A549 (cell line): ENCODE measurements at regions of chr5 and their contacts with region 1.

Region 1: GRCh38 chr5:57779383-57780223 is 297.0 kb upstream of the ACTBL2 start:
- DNase-seq: peak; percentile 35 to 73
- ATAC-seq: peak; percentile 72 to 90; a peak in 4 of 6 replicates
- H3K4me3 ChIP-seq: no peak overlapping the region
- H3K27ac ChIP-seq: peak overlapping the region; percentile 29 to 74; a peak in 5 of 6 replicates
- H3K4me1 ChIP-seq: peaks cover 53% of the 10 kb centered on the region
- CTCF ChIP-seq: peak; percentile 89
- EP300 ChIP-seq: no peak
- POLR2A ChIP-seq: no peak
- RAD21 ChIP-seq: peak; percentile 96

Region 2: DNA sequence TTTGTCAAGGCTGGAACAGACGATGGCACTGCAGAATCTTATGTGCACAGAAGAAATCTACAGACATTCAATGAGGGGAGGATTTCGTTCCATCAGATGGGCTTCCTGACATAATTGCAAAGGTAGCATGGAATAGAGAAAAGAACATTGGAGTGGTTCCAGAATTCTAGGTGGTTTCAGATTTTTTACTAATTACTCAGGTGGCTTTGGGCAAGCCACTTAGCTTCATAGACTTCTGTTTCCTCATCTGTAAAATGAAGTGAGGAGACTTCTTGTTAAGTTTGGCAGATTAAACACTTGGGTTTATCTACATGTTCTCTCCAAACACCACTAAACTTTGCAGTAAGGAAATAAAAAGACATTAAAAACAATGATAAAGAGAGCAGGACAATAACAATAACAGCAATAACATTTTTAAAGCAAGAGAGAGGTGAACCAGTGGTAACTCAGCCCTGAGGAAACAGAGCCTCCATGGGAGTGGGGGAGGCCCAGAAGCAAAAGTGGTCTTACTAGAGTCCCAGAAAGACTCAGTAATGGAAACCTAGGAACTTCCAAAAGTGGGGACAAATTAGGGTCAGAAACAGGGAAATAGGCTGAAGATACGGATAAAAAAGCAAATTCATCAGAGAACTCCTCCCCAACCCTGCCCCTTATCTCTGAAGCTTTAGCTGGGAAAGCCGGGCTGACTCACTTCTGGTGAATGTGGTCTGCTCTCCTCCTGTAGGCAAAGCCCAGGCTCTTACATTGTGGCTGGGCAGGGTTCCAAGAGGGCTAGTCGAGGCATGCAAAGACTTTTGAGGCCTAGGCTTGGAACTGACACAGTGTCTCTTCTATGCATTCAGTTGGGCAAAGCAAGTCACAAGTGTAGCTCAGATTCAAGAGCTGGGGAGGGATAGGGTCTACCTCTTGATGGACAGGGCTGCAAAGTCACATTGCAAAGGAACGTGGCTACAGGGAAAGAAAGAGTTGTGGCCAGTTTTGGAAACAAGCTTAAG is 285.2 kb before region 1 on chr5:
- CTCF ChIA-PET with region 1: interaction called, 119 read pairs
- POLR2A ChIA-PET with region 1: interaction called, 3 read pairs
- DNase-seq: peak; percentile 54 to 71
- ATAC-seq: peak; percentile 81 to 95; a peak in 5 of 6 replicates
- H3K4me3 ChIP-seq: no peak overlapping the region
- H3K27ac ChIP-seq: peak overlapping the region; percentile 74 to 88
- H3K4me1 ChIP-seq: peaks cover 21% of the 10 kb centered on the region
- CTCF ChIP-seq: no peak
- EP300 ChIP-seq: no peak; a peak in 1 of 5 replicates
- POLR2A ChIP-seq: no peak
- RAD21 ChIP-seq: peak; percentile 20 to 31; a peak in 1 of 5 replicates

Region 3: DNA sequence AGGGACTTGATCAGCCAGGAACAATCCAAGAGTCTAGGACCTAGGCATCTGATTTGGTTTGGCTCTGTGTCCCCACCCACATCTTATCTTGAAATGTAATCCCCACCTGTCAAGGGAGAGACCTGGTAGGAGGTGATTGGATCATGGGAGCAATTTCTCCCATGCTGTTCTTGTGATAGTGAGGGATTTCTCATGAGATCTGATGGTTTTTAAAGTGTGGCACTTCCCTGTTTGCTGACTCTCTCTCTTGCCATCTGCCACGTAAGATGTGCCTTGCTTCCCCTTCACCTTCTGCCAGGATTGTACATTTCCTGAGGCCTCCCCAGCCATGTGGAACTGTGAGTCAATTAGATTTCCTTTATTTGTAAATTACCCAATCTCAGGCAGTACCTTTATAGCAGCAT is 95.3 kb before region 1 on chr5:
- CTCF ChIA-PET with region 1: no interaction called
- POLR2A ChIA-PET with region 1: no interaction called
- DNase-seq: no peak
- ATAC-seq: no peak
- H3K4me3 ChIP-seq: no peak overlapping the region
- H3K27ac ChIP-seq: 0 out of 6 replicates have a peak overlapping the region, but pooled peaks of 1 of the 2 experiments have one; percentile 20
- H3K4me1 ChIP-seq: peaks cover 8% of the 10 kb centered on the region
- CTCF ChIP-seq: no peak
- EP300 ChIP-seq: no peak
- POLR2A ChIP-seq: no peak
- RAD21 ChIP-seq: no peak

Region 4: DNA sequence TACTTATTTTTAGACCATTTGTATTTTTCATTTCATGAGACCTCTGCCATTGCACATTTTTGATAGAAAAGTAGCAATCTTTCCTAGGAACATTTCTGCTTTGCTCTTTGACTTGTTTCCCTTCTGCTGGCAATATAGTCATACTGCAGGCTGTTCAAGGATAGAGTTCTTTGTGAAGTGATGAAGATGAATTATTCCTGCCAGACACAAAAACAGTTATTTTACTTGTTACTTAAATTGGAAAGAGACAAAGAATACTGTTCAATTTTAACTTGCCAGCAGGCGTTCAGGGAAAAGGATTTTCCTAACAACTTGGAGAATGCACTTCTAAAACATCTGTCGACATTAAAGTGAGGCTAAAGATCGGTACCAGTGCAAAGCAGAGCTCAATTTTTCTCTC is 45.3 kb before region 1 on chr5:
- CTCF ChIA-PET with region 1: interaction called, 10 read pairs
- POLR2A ChIA-PET with region 1: no interaction called
- DNase-seq: no peak
- ATAC-seq: no peak
- H3K4me3 ChIP-seq: no peak overlapping the region
- H3K27ac ChIP-seq: peak overlapping the region; percentile 82 to 90; a peak in 5 of 6 replicates
- H3K4me1 ChIP-seq: peaks cover 42% of the 10 kb centered on the region
- CTCF ChIP-seq: no peak
- EP300 ChIP-seq: no peak
- POLR2A ChIP-seq: no peak
- RAD21 ChIP-seq: no peak

Region 5: GRCh38 chr5:57816108-57816507 is 36.5 kb after region 1 on chr5:
- CTCF ChIA-PET with region 1: interaction called, 18 read pairs
- POLR2A ChIA-PET with region 1: no interaction called
- DNase-seq: peak; percentile 49 to 85
- ATAC-seq: peak; percentile 87 to 95
- H3K4me3 ChIP-seq: no peak overlapping the region
- H3K27ac ChIP-seq: peak overlapping the region; percentile 3 to 69; a peak in 5 of 6 replicates
- H3K4me1 ChIP-seq: peaks cover 20% of the 10 kb centered on the region
- CTCF ChIP-seq: no peak
- EP300 ChIP-seq: no peak; a peak in 1 of 5 replicates
- POLR2A ChIP-seq: no peak
- RAD21 ChIP-seq: 0 out of 5 replicates have a peak, but pooled peaks have one; percentile 16 to 22

Region 6: DNA sequence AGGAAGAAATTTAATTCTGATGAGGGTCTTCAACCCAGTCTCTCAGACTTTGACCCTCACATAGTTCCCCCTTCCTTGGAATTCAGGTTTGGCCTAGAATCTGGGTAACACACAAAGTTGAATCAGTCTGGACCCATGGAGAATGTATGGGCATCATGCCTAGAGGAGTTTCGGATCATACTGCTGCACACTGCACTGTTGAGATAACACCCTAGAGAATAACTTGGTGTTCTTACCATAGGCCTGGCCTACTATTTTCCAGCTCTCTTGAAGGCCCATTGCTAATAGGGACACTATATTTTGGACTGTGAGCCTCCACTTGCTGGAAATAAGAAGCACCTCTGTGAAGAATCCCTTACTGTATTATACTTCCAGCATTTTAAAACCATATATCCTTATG is 266.8 kb after region 1 on chr5:
- CTCF ChIA-PET with region 1: no interaction called
- POLR2A ChIA-PET with region 1: no interaction called
- DNase-seq: no peak
- ATAC-seq: no peak
- H3K4me3 ChIP-seq: no peak overlapping the region
- H3K27ac ChIP-seq: no peak overlapping the region
- H3K4me1 ChIP-seq: peaks cover 7% of the 10 kb centered on the region; the same call in 1 of the 3 replicates
- CTCF ChIP-seq: no peak
- EP300 ChIP-seq: no peak
- POLR2A ChIP-seq: no peak
- RAD21 ChIP-seq: no peak

Region 7: GRCh38 chr5:58094031-58094430 is 314.4 kb after region 1 on chr5:
- CTCF ChIA-PET with region 1: no interaction called
- POLR2A ChIA-PET with region 1: no interaction called
- DNase-seq: peak; percentile 62 to 89
- ATAC-seq: peak; percentile 73 to 92
- H3K4me3 ChIP-seq: no peak overlapping the region
- H3K27ac ChIP-seq: peak overlapping the region; percentile 61 to 71
- H3K4me1 ChIP-seq: peaks cover 23% of the 10 kb centered on the region
- CTCF ChIP-seq: no peak
- EP300 ChIP-seq: peak; percentile 44 to 59; a peak in 3 of 5 replicates
- POLR2A ChIP-seq: no peak
- RAD21 ChIP-seq: peak in 1 of 2 experiments; percentile 44; a peak in 2 of 5 replicates

Region 8: DNA sequence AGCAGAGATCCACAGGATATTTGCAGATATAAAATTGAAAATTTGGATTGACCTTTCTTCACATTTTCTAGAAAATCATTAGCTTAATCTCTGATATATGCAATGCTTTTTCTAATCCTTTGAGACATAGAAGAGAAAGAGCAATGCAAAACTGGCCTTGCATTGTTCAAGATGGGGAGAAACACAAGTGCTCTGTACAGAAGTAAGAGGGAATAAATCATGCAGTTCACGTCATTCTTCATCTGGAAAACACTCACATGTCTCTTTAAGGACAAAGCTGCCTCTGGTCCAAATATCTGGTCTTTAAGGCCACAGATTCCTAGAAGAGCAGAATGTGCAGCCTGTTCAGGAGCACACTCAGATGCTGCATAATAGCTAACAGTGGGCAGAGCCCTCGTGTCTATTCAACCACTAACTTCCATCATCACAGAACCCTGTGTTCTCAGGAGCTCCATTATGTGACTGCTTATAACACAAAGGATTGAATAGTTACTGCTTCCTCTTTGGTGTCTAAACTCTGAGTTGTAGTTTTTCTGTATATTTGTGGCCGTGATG is 402.8 kb after region 1 on chr5:
- CTCF ChIA-PET with region 1: interaction called, 17 read pairs
- POLR2A ChIA-PET with region 1: no interaction called
- DNase-seq: no peak
- ATAC-seq: peak in 1 of 2 experiments; percentile 54; a peak in 3 of 6 replicates
- H3K4me3 ChIP-seq: no peak overlapping the region
- H3K27ac ChIP-seq: peak overlapping the region; percentile 85 to 91
- H3K4me1 ChIP-seq: peaks cover 62% of the 10 kb centered on the region
- CTCF ChIP-seq: no peak
- EP300 ChIP-seq: no peak
- POLR2A ChIP-seq: no peak
- RAD21 ChIP-seq: no peak

Region 9: GRCh38 chr5:58460732-58461286 is 681.2 kb after region 1 on chr5:
- CTCF ChIA-PET with region 1: interaction called, 149 read pairs
- POLR2A ChIA-PET with region 1: interaction called, 35 read pairs
- DNase-seq: peak; percentile 72 to 92
- ATAC-seq: peak; percentile 67 to 79
- H3K4me3 ChIP-seq: peak overlapping the region; percentile 91
- H3K27ac ChIP-seq: peak overlapping the region; percentile 96 to 100
- H3K4me1 ChIP-seq: peaks cover 17% of the 10 kb centered on the region
- CTCF ChIP-seq: peak; percentile 72
- EP300 ChIP-seq: no peak
- POLR2A ChIP-seq: 0 out of 2 replicates have a peak, but pooled peaks have one; percentile 15
- RAD21 ChIP-seq: peak; percentile 96 to 97